Endothelial cell of umbilical vein (primary cell): ENCODE measurements at regions of chr20 and their contacts with region 1.

Region 1: DNA sequence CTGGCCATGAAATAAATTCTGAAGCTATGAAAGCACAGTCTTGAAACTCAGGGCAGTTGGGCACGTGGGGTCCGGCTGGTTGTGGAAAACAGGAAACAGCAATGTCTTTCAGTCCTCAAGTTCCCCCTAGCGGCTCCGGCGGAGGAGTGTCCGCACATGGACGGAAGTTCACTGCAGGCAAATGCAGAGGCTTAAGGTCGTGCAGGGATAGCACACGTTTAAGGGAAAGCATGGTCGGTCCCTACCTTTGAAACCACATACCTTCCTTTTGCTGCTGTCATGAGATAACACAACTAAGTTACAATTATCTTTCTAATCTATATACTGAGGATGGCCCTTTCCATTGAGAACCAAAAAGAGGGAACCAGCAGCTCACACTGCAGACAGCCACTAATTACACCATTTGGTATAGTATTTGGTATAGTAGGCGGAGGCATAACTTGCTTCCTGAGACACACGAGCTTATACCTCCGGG is 52.6 kb upstream of the NFATC2 start:
- DNase-seq: peak; percentile 94
- H3K4me3 ChIP-seq: no peak overlapping the region
- H3K27ac ChIP-seq: peak overlapping the region; percentile 41
- H3K4me1 ChIP-seq: peaks cover 27% of the 10 kb centered on the region
- H3K27me3 ChIP-seq: no peaks in the 10 kb centered on the region
- CTCF ChIP-seq: peak; percentile 83 to 87
- POLR2A ChIP-seq: no peak

Region 2: DNA sequence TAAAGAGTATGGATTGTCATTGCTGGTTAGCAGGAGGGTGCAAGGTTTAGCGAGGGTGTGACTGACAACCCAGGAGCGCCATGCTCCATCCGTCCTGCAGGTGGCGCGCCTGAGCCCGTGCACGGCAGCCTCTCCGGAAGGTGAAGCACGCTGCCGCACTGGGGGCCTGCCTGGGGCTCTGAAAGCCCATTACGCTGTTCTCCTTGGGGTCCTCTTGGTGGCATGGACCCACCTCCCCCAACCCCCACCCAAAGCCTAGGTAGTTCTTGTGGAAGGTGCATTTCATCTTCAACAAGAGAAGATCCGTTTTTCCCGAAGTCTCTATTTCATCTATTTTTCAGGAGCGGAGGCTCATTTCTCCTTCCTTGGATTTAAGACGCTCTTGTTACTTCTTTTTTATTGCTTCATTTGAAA is 374.8 kb before region 1 on chr20:
- CTCF ChIA-PET with region 1: interaction called, 6 read pairs
- POLR2A ChIA-PET with region 1: no interaction called
- dilution Hi-C with region 1: no loop called
- intact Hi-C with region 1: loop called (anchors 1 kb)
- DNase-seq: peak; percentile 31
- H3K4me3 ChIP-seq: no peak overlapping the region
- H3K27ac ChIP-seq: no peak overlapping the region
- H3K4me1 ChIP-seq: no peaks in the 10 kb centered on the region
- H3K27me3 ChIP-seq: peaks cover 12 to 25% of the 10 kb centered on the region in 2 experiments
- CTCF ChIP-seq: peak; percentile 94 to 99
- POLR2A ChIP-seq: no peak

Region 3: GRCh38 chr20:51378171-51378929 is 216.7 kb before region 1 on chr20:
- CTCF ChIA-PET with region 1: interaction called, 99 read pairs
- POLR2A ChIA-PET with region 1: no interaction called
- dilution Hi-C with region 1: no loop called
- intact Hi-C with region 1: loop called (anchors 1 kb)
- DNase-seq: no peak
- H3K4me3 ChIP-seq: no peak overlapping the region
- H3K27ac ChIP-seq: no peak overlapping the region
- H3K4me1 ChIP-seq: peaks cover 25% of the 10 kb centered on the region
- H3K27me3 ChIP-seq: no peaks in the 10 kb centered on the region
- CTCF ChIP-seq: peak in 1 of 2 donors; percentile 21
- POLR2A ChIP-seq: no peak

Region 4: GRCh38 chr20:51428401-51429143 is 166.5 kb before region 1 on chr20:
- CTCF ChIA-PET with region 1: interaction called, 12 read pairs
- POLR2A ChIA-PET with region 1: no interaction called
- dilution Hi-C with region 1: loop called (anchors 25 kb)
- intact Hi-C with region 1: no loop called
- DNase-seq: peak; percentile 82
- H3K4me3 ChIP-seq: no peak overlapping the region
- H3K27ac ChIP-seq: peak overlapping the region; percentile 9
- H3K4me1 ChIP-seq: peaks cover 14% of the 10 kb centered on the region
- H3K27me3 ChIP-seq: no peaks in the 10 kb centered on the region
- CTCF ChIP-seq: no peak
- POLR2A ChIP-seq: no peak

Region 5: GRCh38 chr20:51500311-51500710 is 94.8 kb before region 1 on chr20:
- CTCF ChIA-PET with region 1: interaction called, 14 read pairs
- POLR2A ChIA-PET with region 1: no interaction called
- dilution Hi-C with region 1: no loop called
- intact Hi-C with region 1: no loop called
- DNase-seq: no peak
- H3K4me3 ChIP-seq: no peak overlapping the region
- H3K27ac ChIP-seq: no peak overlapping the region
- H3K4me1 ChIP-seq: peaks cover 12% of the 10 kb centered on the region
- H3K27me3 ChIP-seq: no peaks in the 10 kb centered on the region
- CTCF ChIP-seq: no peak
- POLR2A ChIP-seq: no peak

Region 6: GRCh38 chr20:51562332-51563155 is 32.6 kb before region 1 on chr20:
- CTCF ChIA-PET with region 1: interaction called, 28 read pairs
- POLR2A ChIA-PET with region 1: no interaction called
- dilution Hi-C with region 1: no loop called
- intact Hi-C with region 1: loop called (anchors 1 kb)
- DNase-seq: peak; percentile 98
- H3K4me3 ChIP-seq: peak overlapping the region; percentile 40 to 62 (median 54)
- H3K27ac ChIP-seq: peak overlapping the region; percentile 64
- H3K4me1 ChIP-seq: peaks cover 24% of the 10 kb centered on the region
- H3K27me3 ChIP-seq: peaks cover 1 to 2% of the 10 kb centered on the region in 2 experiments
- CTCF ChIP-seq: peak; percentile 12
- POLR2A ChIP-seq: no peak

Region 7: DNA sequence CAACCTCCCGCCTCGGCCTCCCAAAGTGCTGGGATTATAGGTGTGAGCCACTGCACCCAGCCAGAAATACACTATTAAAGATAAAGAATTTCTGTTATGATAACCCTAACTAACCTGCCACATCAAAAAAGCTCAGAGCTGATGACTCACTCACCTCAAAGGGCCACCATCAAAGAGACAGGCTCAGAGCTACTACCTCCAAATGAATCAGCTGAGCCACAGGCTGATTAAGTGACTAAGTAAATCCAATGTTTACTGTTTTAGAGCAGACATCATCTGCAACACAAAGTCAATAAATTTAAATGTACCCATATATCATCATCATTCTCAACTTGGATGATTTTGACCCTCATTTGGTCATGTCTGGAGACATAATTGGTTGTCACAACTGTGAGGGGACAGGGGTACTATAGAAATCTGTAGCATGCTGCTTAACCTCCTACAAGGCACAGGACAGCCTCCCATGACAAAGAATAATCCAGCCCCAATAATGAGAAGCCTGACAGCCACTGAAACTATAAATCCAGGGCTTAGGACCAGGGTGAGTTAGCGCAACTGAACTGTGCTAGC is 66.6 kb after region 1 on chr20:
- CTCF ChIA-PET with region 1: no interaction called
- POLR2A ChIA-PET with region 1: interaction called, 10 read pairs
- dilution Hi-C with region 1: no loop called
- intact Hi-C with region 1: no loop called
- DNase-seq: peak; percentile 79
- H3K4me3 ChIP-seq: no peak overlapping the region
- H3K27ac ChIP-seq: peak overlapping the region; percentile 98
- H3K4me1 ChIP-seq: peaks cover 32% of the 10 kb centered on the region
- H3K27me3 ChIP-seq: no peaks in the 10 kb centered on the region
- CTCF ChIP-seq: no peak
- POLR2A ChIP-seq: no peak

Region 8: DNA sequence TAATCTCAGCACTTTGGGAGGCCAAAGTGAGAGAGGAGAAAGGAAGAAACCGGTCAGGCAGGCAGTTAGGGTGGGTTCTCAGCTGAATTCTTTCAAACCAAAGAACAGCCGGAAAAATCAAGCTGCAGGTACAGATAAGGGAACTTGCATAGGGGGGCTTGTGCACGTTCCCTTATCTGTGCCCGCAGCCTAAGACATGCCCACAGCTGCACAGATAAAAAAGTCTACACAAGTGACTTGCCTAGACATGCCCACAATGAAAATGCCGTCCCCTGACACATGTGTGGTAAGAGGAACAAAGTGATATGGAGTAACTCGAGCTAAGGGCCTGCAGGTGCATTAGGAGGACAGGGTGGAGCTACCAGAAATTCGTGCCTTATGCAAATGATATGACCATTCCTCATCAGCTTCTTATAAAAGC is 383.0 kb after region 1 on chr20:
- CTCF ChIA-PET with region 1: no interaction called
- POLR2A ChIA-PET with region 1: no interaction called
- dilution Hi-C with region 1: no loop called
- intact Hi-C with region 1: no loop called
- DNase-seq: no peak
- H3K4me3 ChIP-seq: no peak overlapping the region
- H3K27ac ChIP-seq: no peak overlapping the region
- H3K4me1 ChIP-seq: no peaks in the 10 kb centered on the region
- H3K27me3 ChIP-seq: no peaks in the 10 kb centered on the region
- CTCF ChIP-seq: no peak
- POLR2A ChIP-seq: no peak